Heart right ventricle (tissue), 16 donors: ENCODE measurements at regions of chr17 and their contacts with region 1.

Region 1: GRCh38 chr17:46171939-46172338 is 21.3 kb downstream of the KANSL1 start:
- DNase-seq: no peak
- ATAC-seq: peak in 6 of 8 donors; percentile 25 to 52 (median 43)
- H3K4me3 ChIP-seq: no peak overlapping the region
- H3K27ac ChIP-seq: peak overlapping the region in 2 of 10 donors; percentile 6 to 15
- H3K4me1 ChIP-seq: peaks cover 22 to 97% (median 80%) of the 10 kb centered on the region in 9 donors
- H3K27me3 ChIP-seq: no peaks in the 10 kb centered on the region
- CTCF ChIP-seq: no peak

Region 2: GRCh38 chr17:46121841-46122485 is 50.0 kb before region 1 on chr17:
- intact Hi-C with region 1: loop called in 1 of 10 experiments (anchors 5 kb)
- DNase-seq: no peak
- ATAC-seq: no peak
- H3K4me3 ChIP-seq: no peak overlapping the region
- H3K27ac ChIP-seq: peak overlapping the region in 4 of 10 donors; percentile 19 to 66 (median 28)
- H3K4me1 ChIP-seq: peaks cover 15 to 96% (median 78%) of the 10 kb centered on the region in 9 donors
- H3K27me3 ChIP-seq: no peaks in the 10 kb centered on the region
- CTCF ChIP-seq: no peak